Ovary (tissue), 10 donors: ENCODE measurements at regions of chr2 and their contacts with region 1.

Region 1: DNA sequence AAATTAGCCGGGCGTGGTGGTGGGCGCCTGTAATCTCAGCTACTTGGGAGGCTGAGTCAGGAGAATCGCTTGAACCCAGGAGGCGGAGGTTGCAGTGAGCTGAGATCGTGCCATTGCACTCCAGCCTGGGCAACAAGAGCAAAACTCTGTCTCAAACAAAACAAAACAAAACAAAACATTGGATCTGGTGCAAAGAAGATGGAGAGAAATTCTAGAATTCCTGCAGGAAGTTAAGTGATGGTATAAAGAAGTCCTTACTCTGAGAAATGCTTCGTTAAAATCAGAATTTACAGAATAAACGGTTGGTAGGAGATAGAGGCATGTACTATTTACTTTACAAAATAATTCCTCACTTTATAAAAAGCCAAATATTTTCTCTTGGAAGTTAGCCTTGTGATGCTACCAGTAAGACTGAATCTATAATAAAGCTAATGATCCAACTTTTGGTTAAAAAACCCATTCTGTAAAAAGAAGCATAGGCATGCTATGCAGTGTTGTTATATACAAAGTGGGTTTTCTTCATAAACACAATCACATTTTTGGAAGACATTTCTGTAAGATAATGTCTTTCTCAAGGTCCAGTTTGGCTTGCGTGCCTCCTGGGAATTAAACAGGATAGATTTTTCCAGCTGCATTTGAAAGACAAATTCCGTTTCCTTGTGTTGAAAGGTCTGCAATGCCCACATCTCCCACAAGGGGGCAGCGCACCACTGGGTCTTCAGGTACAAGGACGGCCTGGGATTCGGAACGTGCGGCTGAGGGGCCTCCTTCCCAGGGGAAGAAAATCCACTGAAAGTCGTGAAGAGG is 35.6 kb upstream of the PNO1 start:
- DNase-seq: peak; percentile 83 to 92 (median 92)
- H3K4me3 ChIP-seq: no peak overlapping the region
- H3K27ac ChIP-seq: no peak overlapping the region
- H3K4me1 ChIP-seq: peaks cover 3% of the 10 kb centered on the region
- H3K27me3 ChIP-seq: no peaks in the 10 kb centered on the region
- CTCF ChIP-seq: peak; percentile 74 to 91 (median 88)
- EP300 ChIP-seq: no peak
- POLR2A ChIP-seq: no peak

Region 2: GRCh38 chr2:68009526-68009925 is 112.5 kb before region 1 on chr2:
- intact Hi-C with region 1: no loop called
- DNase-seq: no peak
- H3K4me3 ChIP-seq: no peak overlapping the region
- H3K27ac ChIP-seq: no peak overlapping the region
- H3K4me1 ChIP-seq: no peaks in the 10 kb centered on the region
- H3K27me3 ChIP-seq: no peaks in the 10 kb centered on the region
- CTCF ChIP-seq: no peak
- EP300 ChIP-seq: no peak
- POLR2A ChIP-seq: no peak

Region 3: DNA sequence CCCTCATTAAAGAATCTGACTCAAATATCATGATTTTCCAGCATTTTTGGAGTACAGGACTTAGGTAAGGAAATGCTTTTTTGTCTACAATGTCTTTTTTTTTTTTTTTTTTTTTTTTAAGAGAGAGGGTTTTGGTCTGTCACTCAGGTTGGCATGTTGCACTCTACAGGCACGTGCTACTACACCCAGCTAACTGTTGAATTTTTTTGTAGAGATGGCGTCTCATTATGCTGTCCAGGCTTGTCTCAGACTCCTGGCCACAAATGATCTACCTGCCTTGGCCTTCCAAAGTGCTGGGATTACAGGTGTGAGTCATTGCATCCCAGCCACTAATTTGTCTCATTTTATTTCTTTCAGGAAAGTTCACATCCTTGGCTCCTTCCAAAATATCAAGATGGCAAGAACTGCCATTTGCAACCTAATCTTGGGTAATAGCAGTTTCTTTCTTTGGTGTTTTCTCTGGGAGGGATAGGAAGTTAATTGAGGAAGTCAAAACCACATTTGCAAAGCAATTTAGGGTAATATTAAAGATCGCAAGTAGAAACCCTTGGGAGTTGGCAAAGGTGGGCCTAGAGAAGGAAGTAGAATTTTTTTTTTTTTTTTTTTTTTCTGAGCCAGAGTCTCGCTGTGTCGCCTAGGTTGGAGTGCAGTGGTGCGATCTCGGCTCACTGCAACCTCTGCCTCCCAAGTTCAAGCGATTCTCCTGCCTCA is 51.1 kb after region 1 on chr2:
- intact Hi-C with region 1: no loop called
- DNase-seq: no peak
- H3K4me3 ChIP-seq: no peak overlapping the region
- H3K27ac ChIP-seq: no peak overlapping the region
- H3K4me1 ChIP-seq: no peaks in the 10 kb centered on the region
- H3K27me3 ChIP-seq: no peaks in the 10 kb centered on the region
- CTCF ChIP-seq: no peak
- EP300 ChIP-seq: no peak
- POLR2A ChIP-seq: no peak

Region 4: GRCh38 chr2:68282811-68283418 is 160.8 kb after region 1 on chr2:
- intact Hi-C with region 1: loop called (anchors 5 to 10 kb)
- DNase-seq: no peak
- H3K4me3 ChIP-seq: no peak overlapping the region
- H3K27ac ChIP-seq: no peak overlapping the region
- H3K4me1 ChIP-seq: no peaks in the 10 kb centered on the region
- H3K27me3 ChIP-seq: no peaks in the 10 kb centered on the region
- CTCF ChIP-seq: peak; percentile 37 to 55 (median 47)
- EP300 ChIP-seq: no peak
- POLR2A ChIP-seq: no peak